Caco-2 (cell line): ENCODE measurements at regions of chr17 and their contacts with region 1.

Region 1: DNA sequence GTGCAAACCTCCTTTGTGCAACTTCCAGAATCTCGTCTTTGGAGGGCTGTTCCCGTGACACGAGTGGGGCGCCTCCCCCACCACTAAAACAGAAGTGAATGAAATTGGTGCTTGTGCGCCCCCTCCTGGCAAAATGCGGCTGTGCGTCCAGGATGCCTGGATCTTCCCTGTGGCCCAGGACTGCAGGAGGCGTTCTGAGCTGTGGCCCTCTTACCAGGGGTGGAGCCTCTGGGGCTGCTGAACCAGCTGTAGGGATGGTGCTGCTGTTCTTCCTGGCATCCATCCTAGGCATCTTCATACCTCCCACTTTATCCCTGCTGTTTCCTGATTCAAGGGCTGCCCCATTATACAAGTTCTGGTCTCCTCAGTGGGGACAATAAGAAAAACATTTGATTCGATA is 18.5 kb upstream of the NAGLU start:
- DNase-seq: peak; percentile 82 to 89
- H3K4me3 ChIP-seq: no peak overlapping the region
- H3K4me3 Mint-ChIP-seq: no peak overlapping the region
- H3K27ac Mint-ChIP-seq: peak overlapping the region; percentile 90
- H3K4me1 ChIP-seq: peaks cover 51% of the 10 kb centered on the region
- H3K4me1 Mint-ChIP-seq: peaks cover 46% of the 10 kb centered on the region
- H3K27me3 ChIP-seq: no peaks in the 10 kb centered on the region
- H3K27me3 Mint-ChIP-seq: no peaks in the 10 kb centered on the region
- CTCF ChIP-seq: peak; percentile 90 to 97

Region 2: GRCh38 chr17:42459256-42459800 is 58.2 kb before region 1 on chr17:
- CTCF ChIA-PET with region 1: no interaction called
- POLR2A ChIA-PET with region 1: no interaction called
- intact Hi-C with region 1: loop called (anchors 10 kb)
- DNase-seq: peak; percentile 54 to 68
- H3K4me3 ChIP-seq: peak overlapping the region; percentile 82
- H3K4me3 Mint-ChIP-seq: peak overlapping the region; percentile 100
- H3K27ac Mint-ChIP-seq: peak overlapping the region; percentile 98
- H3K4me1 ChIP-seq: peaks cover 33% of the 10 kb centered on the region
- H3K4me1 Mint-ChIP-seq: peaks cover 35% of the 10 kb centered on the region
- H3K27me3 ChIP-seq: no peaks in the 10 kb centered on the region
- H3K27me3 Mint-ChIP-seq: no peaks in the 10 kb centered on the region
- CTCF ChIP-seq: peak; percentile 32 to 51